ENCODE measurements at regions of chr3 and their contacts with region 1.

Region 1: DNA sequence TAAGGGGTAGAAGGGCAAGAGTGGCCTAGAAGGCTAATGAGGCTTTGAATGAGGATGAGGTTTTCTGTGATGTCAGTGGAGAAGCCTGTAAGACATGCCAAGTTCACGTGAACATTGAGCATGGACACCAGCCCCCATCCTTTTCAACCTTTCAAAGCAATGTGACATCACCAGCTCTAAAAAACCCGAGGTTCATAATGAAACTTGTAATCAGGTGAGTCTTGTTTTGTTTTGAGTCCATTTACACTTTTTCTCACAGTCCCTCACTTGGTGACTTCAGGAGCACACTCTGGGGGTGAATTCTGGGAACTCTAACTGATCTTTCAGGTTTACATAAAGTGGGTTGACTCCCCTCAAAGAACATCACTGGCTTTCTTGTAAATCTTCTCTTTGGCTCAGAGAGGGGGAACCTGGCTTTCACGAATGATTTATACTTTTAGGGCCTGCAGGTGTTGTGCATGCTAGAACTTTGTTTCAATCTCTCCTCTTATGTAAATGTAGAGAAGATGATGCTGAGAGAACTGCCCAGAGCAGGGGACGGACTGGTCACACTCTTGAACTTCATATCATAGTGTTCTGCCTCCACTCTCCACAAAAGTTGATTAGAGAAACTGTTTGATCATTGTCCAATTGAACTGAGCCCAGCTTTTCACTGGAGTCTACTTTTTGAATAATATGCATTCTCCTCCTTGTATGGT is 224.7 kb upstream of the SATB1 start:
- DNase-seq: peak; percentile 87
- H3K4me3 Mint-ChIP-seq: no peak overlapping the region
- H3K27ac Mint-ChIP-seq: peak overlapping the region; percentile 92
- H3K4me1 Mint-ChIP-seq: peaks cover 74% of the 10 kb centered on the region
- H3K27me3 Mint-ChIP-seq: no peaks in the 10 kb centered on the region

Region 2: DNA sequence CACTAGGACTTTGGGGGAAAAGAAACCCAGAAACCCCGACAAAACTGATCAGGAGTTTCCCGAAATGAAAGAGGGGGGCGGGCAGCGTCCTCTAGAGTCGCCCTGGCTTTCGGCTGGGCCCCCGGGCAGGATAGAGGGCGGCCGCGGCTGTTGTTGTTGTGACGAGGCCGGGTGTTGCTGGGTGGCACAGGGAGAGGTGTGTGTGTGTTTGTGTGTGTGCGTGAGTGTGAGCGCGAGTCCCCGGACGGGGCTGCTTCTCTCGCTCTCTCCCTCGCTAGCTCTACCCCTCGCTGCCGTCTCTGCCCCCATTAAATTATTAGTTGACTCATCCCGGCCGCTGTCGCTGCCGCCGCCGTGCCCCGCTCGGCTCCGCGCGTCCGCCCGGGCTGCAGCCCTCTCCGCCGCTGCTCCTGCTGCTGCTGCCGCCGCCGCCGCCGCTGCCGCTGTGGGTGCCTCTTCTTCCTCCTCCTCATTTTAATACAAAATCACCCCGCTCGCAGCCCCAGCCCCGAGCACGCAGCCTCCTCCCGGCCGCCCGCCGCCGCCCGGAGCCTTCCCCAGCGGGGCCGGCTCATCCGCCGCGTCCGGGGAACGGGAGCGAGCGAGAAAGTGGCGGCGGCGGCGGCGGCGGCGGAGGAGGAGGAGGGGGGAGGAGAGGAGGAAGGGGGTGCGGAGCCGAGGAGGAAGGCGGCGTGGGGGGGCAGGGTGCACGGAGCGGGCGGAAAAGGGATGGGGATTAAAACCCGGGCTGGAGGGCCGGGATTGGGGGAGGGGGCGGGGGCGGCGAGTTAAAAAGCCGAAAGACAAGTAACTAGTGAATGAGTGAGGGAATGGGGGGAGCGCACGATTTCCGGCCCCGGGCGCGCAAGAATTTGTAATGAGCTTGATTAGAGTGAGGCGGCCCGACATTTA is 224.8 kb before region 1 on chr3 and contains the start of gene SATB1:
- CTCF ChIA-PET with region 1: no interaction called
- intact Hi-C with region 1: loop called (anchors 5 kb)
- DNase-seq: peak; percentile 84
- H3K4me3 Mint-ChIP-seq: peak within 1 kb of the TSS; percentile 86
- H3K27ac Mint-ChIP-seq: peak within 1 kb of the TSS; percentile 98
- H3K4me1 Mint-ChIP-seq: peaks cover 73% of the 10 kb centered on the region
- H3K27me3 Mint-ChIP-seq: no peaks in the 10 kb centered on the region
- total RNA-seq, gene SATB1: 303 to 305 TPM

Region 3: DNA sequence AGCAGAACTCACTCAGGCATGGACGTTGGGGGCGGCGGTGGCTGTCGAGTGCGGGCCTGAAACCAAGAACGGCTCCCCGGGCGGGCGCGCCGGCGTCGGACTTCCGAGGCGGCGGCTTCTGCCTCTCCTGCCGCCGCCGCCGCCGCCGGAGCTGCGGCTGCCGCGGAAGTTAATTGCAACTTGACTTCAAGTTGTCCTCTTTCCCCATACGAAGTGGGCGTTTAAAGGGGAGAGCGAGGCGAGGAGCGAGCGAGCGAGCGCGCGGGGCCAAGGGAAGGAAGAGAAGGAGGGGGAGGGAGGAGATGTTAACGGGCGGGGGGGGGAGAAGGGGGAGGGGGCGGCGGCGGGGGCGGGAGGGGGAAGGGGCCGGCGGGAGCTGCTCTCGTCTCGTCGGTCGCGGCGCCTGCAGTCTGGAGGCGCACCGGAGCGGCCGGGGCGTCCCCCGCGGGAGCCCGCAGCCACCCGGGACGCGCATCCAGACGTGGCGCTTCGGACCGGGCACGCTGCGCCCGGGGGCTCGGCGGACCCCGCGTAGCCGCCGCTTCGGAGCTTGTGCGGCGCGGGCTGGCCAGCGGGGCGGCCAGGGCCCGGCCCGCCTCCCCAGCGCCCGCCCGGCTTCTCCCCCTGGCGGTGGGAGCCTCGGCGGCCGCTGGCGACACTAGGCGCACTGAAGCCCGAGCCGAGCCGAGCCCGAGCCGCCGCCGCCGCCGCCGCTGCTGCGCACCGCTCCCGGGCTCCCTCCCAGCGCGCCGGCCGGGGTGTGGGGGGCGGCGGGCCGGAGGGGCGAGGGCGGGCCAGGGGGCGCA is 205.0 kb before region 1 on chr3:
- CTCF ChIA-PET with region 1: interaction called, 4 read pairs
- intact Hi-C with region 1: loop called (anchors 1 kb)
- DNase-seq: peak; percentile 83
- H3K4me3 Mint-ChIP-seq: peak overlapping the region; percentile 94
- H3K27ac Mint-ChIP-seq: peak overlapping the region; percentile 97
- H3K4me1 Mint-ChIP-seq: peaks cover 36% of the 10 kb centered on the region
- H3K27me3 Mint-ChIP-seq: no peaks in the 10 kb centered on the region

Region 4: DNA sequence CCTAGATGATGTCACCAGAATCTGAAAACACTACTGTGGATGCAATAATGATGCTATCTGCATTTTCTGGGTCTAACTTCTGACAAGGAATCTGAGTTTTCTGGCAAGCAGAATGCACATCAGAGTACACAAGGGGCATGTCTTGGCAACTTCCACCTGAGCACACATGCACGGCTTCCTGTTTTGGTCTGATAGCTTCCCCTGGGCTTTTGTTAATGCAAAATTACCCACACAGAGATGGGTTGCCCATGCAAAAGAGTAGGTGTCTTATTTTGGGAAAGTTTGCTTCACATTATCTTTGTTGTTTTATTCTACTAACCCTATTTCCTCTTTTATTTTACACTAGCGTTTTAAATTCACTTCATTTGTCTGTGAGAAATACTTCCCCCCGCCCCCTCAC is 150.5 kb before region 1 on chr3:
- CTCF ChIA-PET with region 1: no interaction called
- intact Hi-C with region 1: loop called (anchors 1 kb)
- DNase-seq: peak; percentile 42
- H3K4me3 Mint-ChIP-seq: peak overlapping the region; percentile 46
- H3K27ac Mint-ChIP-seq: peak overlapping the region; percentile 83
- H3K4me1 Mint-ChIP-seq: peaks cover 41% of the 10 kb centered on the region
- H3K27me3 Mint-ChIP-seq: no peaks in the 10 kb centered on the region

Region 5: GRCh38 chr3:18669374-18669773 is 19.6 kb after region 1 on chr3:
- CTCF ChIA-PET with region 1: no interaction called
- intact Hi-C with region 1: loop called (anchors 1 kb)
- DNase-seq: peak; percentile 68
- H3K4me3 Mint-ChIP-seq: no peak overlapping the region
- H3K27ac Mint-ChIP-seq: peak overlapping the region; percentile 76
- H3K4me1 Mint-ChIP-seq: peaks cover 49% of the 10 kb centered on the region
- H3K27me3 Mint-ChIP-seq: no peaks in the 10 kb centered on the region

Region 6: DNA sequence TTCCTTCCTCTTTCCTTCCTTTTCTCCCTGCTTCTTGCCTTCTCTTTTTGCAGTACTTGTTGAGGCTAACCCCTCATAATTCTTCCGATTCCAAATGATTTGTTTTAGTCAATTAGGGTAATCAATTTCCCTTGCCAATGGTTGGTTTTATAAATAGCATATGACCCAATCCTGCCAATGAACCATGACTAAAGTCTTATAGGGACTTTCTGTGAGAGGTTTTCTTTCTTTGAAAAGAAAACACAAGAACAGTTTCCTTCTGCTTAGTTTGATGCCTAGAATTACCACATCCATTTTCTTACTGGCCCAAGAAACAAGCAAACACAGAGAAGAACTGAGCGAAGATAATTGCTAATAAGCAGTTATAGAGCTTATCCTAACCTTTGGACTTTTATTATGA is 67.8 kb after region 1 on chr3:
- CTCF ChIA-PET with region 1: interaction called, 5 read pairs
- intact Hi-C with region 1: loop called (anchors 1 kb)
- DNase-seq: no peak
- H3K4me3 Mint-ChIP-seq: no peak overlapping the region
- H3K27ac Mint-ChIP-seq: peak overlapping the region; percentile 84
- H3K4me1 Mint-ChIP-seq: peaks cover 71% of the 10 kb centered on the region
- H3K27me3 Mint-ChIP-seq: no peaks in the 10 kb centered on the region

Region 7: DNA sequence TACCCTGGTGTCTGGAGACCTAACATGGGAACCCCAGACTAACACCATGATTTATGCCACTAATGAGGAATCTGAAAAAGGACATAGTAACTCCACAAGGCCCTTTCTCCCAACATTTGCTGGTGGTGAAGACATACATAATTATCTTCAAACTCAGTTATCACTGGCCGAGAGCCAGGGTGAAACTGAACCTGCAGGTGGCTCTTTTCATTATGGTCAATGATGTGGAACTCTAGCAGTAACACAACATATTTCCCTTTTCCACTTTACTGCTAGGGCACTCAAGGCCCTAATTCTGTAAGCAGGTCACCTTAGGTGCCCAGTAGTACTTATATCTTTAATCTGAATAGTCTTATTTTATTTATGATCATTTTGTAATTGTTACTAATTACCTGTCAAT is 101.7 kb after region 1 on chr3:
- CTCF ChIA-PET with region 1: no interaction called
- intact Hi-C with region 1: loop called (anchors 1 kb)
- DNase-seq: no peak
- H3K4me3 Mint-ChIP-seq: no peak overlapping the region
- H3K27ac Mint-ChIP-seq: no peak overlapping the region
- H3K4me1 Mint-ChIP-seq: peaks cover 76% of the 10 kb centered on the region
- H3K27me3 Mint-ChIP-seq: no peaks in the 10 kb centered on the region